PC-9 (cell line): ENCODE measurements at regions of chr10 and their contacts with region 1.

Region 1: DNA sequence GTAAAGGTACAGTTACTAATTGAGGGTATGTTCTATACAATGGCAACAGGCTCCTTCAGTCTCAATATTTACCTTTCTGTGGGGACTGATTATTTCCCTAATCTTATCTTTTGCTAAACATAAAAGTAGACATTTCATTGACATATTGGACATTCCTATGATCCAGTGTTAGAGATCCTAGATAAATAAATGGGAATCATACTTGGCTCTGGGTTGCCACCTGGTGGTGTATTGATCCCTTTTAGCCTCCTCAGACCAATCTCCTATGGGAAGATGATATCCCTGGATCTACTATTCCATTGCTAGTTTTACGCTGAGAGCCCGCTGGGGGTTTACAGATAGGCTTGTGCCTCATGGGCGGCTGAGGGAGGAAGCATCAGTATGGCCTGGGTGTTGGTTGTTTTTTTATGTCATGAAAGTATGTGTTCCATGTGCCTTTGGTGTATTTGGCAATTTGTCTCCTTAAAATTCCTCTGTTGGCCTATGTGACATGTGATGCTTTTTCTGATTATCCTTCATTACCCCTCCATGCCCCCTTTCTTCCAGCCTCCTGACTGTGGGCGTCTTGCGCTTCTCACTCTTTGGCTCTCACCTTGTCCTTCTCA is 18.8 kb downstream of the CELF2 start:
- DNase-seq: peak in 1 of 2 experiments; percentile 22
- H3K4me3 ChIP-seq: no peak overlapping the region
- H3K27ac ChIP-seq: no peak overlapping the region
- H3K4me1 ChIP-seq: no peaks in the 10 kb centered on the region
- H3K27me3 ChIP-seq: no peaks in the 10 kb centered on the region
- CTCF ChIP-seq: peak; percentile 76

Region 2: DNA sequence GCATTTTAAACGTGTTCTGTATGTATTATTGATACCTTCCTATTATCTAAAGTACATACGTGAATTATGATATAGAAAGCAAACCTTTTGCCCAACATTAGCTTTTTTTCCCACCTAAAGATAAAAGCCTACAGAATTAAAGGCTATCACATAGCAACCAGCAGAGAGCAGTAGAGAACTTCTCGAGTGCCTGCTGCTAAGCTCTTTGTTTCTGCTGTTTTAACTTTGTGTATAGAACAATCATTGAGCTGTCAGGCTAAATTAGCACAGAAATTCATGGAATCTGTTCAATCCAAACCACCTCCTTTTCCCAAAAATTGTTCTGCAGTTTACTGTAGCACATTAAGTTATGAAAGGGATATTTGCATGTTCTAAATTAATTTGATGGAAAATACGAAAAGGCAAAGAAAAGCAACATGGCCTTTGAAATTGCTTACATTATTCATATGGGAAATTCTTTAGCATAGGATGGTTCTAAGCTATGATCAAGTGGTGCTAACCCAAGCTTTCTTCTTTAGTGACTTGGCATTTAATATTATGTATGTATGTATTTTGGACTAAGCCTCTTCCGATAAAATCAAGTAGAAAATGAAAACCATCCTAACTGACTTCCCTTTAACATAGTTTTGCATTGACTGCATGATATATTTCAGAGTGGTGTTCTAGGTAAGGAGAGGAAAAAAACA is 1693.5 kb before region 1 on chr10:
- CTCF ChIA-PET with region 1: interaction called, 3 read pairs
- POLR2A ChIA-PET with region 1: no interaction called
- intact Hi-C with region 1: loop called (anchors 2 kb)
- DNase-seq: peak in 1 of 2 experiments; percentile 3
- H3K4me3 ChIP-seq: no peak overlapping the region
- H3K27ac ChIP-seq: no peak overlapping the region
- H3K4me1 ChIP-seq: no peaks in the 10 kb centered on the region
- H3K27me3 ChIP-seq: peaks cover 4% of the 10 kb centered on the region; the same call in 1 of the 2 replicates
- CTCF ChIP-seq: peak; percentile 64

Region 3: GRCh38 chr10:9608602-9609001 is 1427.9 kb before region 1 on chr10:
- CTCF ChIA-PET with region 1: no interaction called
- POLR2A ChIA-PET with region 1: no interaction called
- intact Hi-C with region 1: loop called (anchors 5 kb)
- DNase-seq: no peak
- H3K4me3 ChIP-seq: no peak overlapping the region
- H3K27ac ChIP-seq: no peak overlapping the region
- H3K4me1 ChIP-seq: no peaks in the 10 kb centered on the region
- H3K27me3 ChIP-seq: no peaks in the 10 kb centered on the region
- CTCF ChIP-seq: peak; percentile 58

Region 4: DNA sequence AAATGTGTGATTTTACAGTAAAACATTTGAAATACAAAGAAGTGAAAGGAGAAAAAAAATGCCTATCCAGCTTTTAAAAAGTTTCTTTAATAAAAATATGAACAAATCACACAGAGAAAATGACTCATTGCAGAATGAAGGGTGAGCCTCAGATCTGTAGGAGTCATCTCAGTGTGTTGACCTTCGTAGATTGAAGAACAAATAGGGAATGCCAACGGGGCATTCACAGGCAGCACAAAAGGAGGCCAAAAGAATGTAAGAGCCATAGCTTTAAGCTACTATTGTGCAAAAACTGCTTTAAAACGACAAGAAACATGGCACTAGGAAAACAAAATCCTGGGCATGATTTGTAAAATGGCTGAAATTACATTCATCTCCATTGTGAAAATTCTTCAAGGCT is 801.5 kb before region 1 on chr10:
- CTCF ChIA-PET with region 1: no interaction called
- POLR2A ChIA-PET with region 1: no interaction called
- intact Hi-C with region 1: loop called (anchors 5 kb)
- DNase-seq: no peak
- H3K4me3 ChIP-seq: no peak overlapping the region
- H3K27ac ChIP-seq: no peak overlapping the region
- H3K4me1 ChIP-seq: no peaks in the 10 kb centered on the region
- H3K27me3 ChIP-seq: no peaks in the 10 kb centered on the region
- CTCF ChIP-seq: no peak

Region 5: GRCh38 chr10:10515479-10516204 is 520.9 kb before region 1 on chr10:
- CTCF ChIA-PET with region 1: no interaction called
- POLR2A ChIA-PET with region 1: no interaction called
- intact Hi-C with region 1: loop called (anchors 5 kb)
- DNase-seq: no peak
- H3K4me3 ChIP-seq: no peak overlapping the region
- H3K27ac ChIP-seq: no peak overlapping the region
- H3K4me1 ChIP-seq: no peaks in the 10 kb centered on the region
- H3K27me3 ChIP-seq: peaks cover 15% of the 10 kb centered on the region
- CTCF ChIP-seq: no peak